Heart left ventricle (tissue), 16 donors: ENCODE measurements at regions of chr1 and their contacts with region 1.

Region 1: DNA sequence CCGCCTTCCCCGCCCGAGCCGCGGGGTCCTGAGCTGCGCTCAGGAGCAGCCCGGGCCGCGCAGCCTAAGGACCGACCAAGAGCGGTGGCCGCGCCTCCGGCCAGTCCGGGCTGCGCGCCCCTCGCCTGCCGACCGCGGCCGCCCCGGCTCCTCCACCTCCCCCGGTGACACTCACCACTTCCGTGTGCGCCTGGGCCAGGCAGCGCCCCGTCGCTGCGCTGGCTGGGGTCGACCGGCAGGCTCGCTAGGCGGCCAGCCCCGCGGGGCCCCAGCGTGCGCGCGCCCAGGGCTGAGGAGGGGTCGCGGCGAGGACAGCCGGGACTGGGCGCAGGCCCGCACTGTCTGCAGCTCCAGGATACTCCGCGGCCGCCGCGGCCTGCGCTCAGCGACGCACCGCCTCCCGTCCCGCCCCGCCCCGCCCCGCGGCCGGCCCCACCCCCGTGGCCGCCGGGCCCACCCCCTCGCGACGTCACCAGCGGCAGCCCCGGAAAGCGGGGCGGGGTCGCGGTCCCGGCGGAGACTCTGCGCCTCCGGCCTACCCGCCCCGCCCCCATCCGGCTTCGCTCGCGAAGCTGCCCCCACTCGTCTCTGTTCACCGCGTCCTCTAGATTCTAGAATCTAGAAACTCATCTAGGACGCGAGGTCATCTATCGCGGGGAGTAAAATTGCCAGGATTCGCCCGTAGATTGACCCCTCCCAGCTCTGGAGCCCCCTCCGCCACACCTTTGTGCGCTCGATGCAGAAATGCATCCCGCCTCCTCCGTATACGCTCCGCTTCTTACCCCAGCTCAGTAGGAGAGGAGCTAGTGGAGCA is at the start of gene JAK1:
- DNase-seq: peak; percentile 93 to 96 (median 94)
- ATAC-seq: peak; percentile 76 to 97 (median 94)
- H3K4me3 ChIP-seq: peak within 1 kb of the TSS; percentile 83 to 100 (median 96)
- H3K27ac ChIP-seq: peak within 1 kb of the TSS; percentile 92 to 100 (median 96)
- H3K4me1 ChIP-seq: peaks cover 0 to 46% (median 32%) of the 10 kb centered on the region in 12 donors
- H3K27me3 ChIP-seq: no peaks in the 10 kb centered on the region
- CTCF ChIP-seq: peak in 1 of 12 donors; percentile 22
- POLR2A ChIP-seq: peak; percentile 56 to 97
- total RNA-seq, gene JAK1: 85.6 to 189 (median 96.5) TPM

Region 2: GRCh38 chr1:64877151-64877550 is 89.2 kb before region 1 on chr1:
- intact Hi-C with region 1: loop called in 3 of 10 experiments (anchors 2 to 5 kb)
- DNase-seq: no peak
- ATAC-seq: no peak
- H3K4me3 ChIP-seq: no peak overlapping the region
- H3K27ac ChIP-seq: peak overlapping the region in 1 of 12 donors; percentile 21
- H3K4me1 ChIP-seq: peaks cover 0 to 45% (median 13%) of the 10 kb centered on the region in 12 donors
- H3K27me3 ChIP-seq: no peaks in the 10 kb centered on the region
- CTCF ChIP-seq: no peak
- POLR2A ChIP-seq: no peak

Region 3: DNA sequence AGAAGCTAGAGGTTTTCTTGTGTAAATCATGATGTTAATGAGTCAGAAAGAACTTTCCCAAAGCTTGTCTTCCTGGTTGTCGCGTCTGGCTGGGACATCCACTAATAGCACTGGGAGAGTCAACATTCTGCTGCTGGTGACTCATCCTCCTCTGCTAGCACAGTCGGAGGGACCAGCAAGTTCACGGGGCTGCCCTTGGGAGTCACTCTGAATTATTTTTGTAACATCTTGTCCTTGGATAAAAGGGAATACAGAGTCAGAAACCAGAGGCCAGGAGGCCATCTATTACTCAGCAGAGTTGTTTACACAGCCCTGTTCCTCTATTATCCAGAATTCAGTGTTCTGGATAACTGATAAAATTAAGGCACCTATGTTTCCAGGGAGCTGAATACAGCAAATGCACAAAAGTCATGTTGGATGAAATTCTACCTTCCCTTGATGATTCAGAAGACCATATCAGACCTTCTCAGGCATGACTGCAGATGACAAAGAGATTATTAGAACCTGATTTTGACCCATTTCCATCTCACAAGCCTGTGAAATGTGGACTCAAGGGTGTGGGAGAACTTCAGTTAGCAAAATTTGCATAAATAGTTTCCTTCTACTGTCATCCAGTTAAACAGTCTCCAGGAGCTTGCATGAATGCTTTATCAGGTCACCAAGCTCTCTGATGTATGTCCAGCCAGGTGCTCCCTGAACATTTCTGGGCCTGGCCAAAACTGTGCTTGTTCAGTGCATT is 68.1 kb before region 1 on chr1:
- intact Hi-C with region 1: loop called in 5 of 10 experiments (anchors 5 to 10 kb)
- DNase-seq: peak; percentile 81 to 93 (median 87)
- ATAC-seq: peak; percentile 95 to 98 (median 98)
- H3K4me3 ChIP-seq: no peak overlapping the region
- H3K27ac ChIP-seq: peak overlapping the region; percentile 67 to 87 (median 81)
- H3K4me1 ChIP-seq: peaks cover 5 to 87% (median 37%) of the 10 kb centered on the region in 12 donors
- H3K27me3 ChIP-seq: no peaks in the 10 kb centered on the region
- CTCF ChIP-seq: no peak
- POLR2A ChIP-seq: no peak

Region 4: DNA sequence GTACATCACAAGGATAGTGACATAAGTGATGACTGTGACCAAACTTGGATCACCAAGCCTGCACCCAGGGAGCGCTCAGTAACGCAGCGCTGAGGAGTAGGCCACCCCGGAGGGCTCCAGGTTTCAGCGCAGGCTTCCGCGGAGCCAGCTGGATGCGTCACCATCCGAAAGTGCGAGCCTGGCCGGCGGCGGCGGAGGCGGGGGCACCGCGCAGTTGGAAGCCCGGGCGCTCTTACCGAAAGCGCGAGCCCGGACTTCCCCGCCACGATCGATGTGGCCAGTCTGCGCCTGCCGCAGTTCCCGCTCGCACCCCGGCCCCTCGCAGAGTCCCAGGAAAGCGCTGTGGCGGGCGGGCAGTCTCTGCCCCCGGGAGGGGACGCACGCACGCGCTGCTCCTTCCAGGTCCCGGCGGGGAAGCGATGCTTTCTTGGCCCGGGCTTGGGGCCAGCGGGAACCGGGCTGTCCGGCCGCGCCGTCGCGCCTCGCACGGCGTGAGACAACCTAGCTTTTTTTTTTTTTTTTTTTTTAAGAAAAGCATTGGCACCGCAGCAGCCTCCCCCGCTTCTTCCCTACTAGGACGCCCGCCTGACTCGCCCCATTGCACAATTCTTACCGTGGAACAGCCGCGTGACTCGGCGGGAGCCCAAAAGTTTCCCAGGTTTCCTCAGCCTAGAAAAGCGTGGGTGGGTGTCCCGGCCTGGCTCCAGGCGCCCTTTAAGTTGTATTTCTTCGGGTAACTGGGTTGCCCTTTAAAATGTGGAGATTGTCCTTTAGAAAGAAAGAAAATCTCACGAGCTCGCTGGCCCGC is 36.3 kb after region 1 on chr1:
- intact Hi-C with region 1: loop called in 4 of 10 experiments (anchors 5 kb)
- DNase-seq: peak; percentile 79 to 91 (median 88)
- ATAC-seq: peak; percentile 56 to 93 (median 86)
- H3K4me3 ChIP-seq: peak overlapping the region; percentile 27 to 82 (median 67)
- H3K27ac ChIP-seq: peak overlapping the region; percentile 78 to 98 (median 92)
- H3K4me1 ChIP-seq: peaks cover 4 to 31% (median 16%) of the 10 kb centered on the region in 12 donors
- H3K27me3 ChIP-seq: no peaks in the 10 kb centered on the region
- CTCF ChIP-seq: peak in 1 of 12 donors; percentile 5
- POLR2A ChIP-seq: peak in 1 of 2 donors; percentile 42